ENCODE measurements at regions of chr7 and their contacts with region 1.

Region 1: DNA sequence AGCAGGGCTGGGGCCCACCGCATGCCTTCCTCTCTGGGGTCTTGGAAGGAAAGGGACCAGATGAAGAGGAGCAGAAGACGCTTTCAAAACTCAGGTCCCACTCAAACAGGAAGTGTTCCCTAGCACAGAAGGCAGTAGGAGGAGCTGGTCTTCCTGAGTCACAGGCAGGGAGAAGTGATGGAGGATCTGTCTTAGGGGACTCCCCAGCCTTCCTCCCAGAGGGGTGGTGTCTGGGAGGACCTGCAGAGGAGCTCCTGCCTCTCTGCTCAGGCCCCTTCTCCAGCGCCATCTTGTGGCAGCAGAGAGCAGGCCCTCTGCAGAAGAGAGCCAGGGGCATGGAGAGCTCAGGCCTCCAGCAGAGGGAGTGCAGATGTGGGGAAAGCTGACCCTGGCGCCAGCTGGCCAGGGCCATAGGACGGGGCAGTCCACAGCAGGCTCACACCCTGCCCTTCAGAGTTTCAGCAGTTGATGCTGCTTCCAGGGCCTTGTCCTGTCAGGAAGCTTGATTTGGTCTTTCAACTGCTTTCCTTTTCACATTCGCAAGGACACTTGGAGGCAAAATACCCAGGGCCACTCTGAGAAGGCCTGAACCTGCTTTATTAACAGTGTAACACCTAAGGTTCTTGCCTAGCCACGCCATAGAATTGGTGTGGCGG is 62.2 kb upstream of the TARP start:
- DNase-seq: peak; percentile 82
- ATAC-seq: peak; percentile 97
- H3K4me3 ChIP-seq: peak overlapping the region; percentile 45; the same call in 1 of the 2 replicates
- H3K27ac ChIP-seq: no peak overlapping the region
- H3K4me1 ChIP-seq: no peaks in the 10 kb centered on the region; the same call in 1 of the 2 replicates
- H3K27me3 ChIP-seq: no peaks in the 10 kb centered on the region
- CTCF ChIP-seq: peak; percentile 99 to 100 (median 100)
- EP300 ChIP-seq: no peak
- POLR2A ChIP-seq: no peak
- RAD21 ChIP-seq: peak; percentile 84

Region 2: GRCh38 chr7:37467002-37467401 is 868.6 kb before region 1 on chr7:
- CTCF ChIA-PET with region 1: no interaction called
- POLR2A ChIA-PET with region 1: no interaction called
- RAD21 ChIA-PET with region 1: no interaction called
- SMC1A ChIA-PET with region 1: no interaction called
- in situ Hi-C with region 1: no loop called
- intact Hi-C with region 1: no loop called
- DNase-seq: no peak
- ATAC-seq: peak; percentile 61
- H3K4me3 ChIP-seq: no peak overlapping the region
- H3K27ac ChIP-seq: no peak overlapping the region
- H3K4me1 ChIP-seq: no peaks in the 10 kb centered on the region
- H3K27me3 ChIP-seq: no peaks in the 10 kb centered on the region; a peak in 1 of 4 replicates
- CTCF ChIP-seq: no peak
- EP300 ChIP-seq: no peak
- POLR2A ChIP-seq: no peak
- RAD21 ChIP-seq: no peak

Region 3: GRCh38 chr7:37901236-37901827 is 434.3 kb before region 1 on chr7:
- CTCF ChIA-PET with region 1: interaction called, 34 read pairs
- POLR2A ChIA-PET with region 1: no interaction called
- RAD21 ChIA-PET with region 1: interaction called, 13 read pairs
- SMC1A ChIA-PET with region 1: interaction called, 14 read pairs
- in situ Hi-C with region 1: no loop called
- intact Hi-C with region 1: loop called (anchors 1 kb)
- DNase-seq: no peak
- ATAC-seq: peak; percentile 78
- H3K4me3 ChIP-seq: no peak overlapping the region
- H3K27ac ChIP-seq: no peak overlapping the region
- H3K4me1 ChIP-seq: no peaks in the 10 kb centered on the region
- H3K27me3 ChIP-seq: peaks cover 0 to 2% of the 10 kb centered on the region in 2 experiments; a peak in 1 of 4 replicates
- CTCF ChIP-seq: peak; percentile 47 to 59 (median 50); a peak in 5 of 6 replicates
- EP300 ChIP-seq: no peak
- POLR2A ChIP-seq: no peak
- RAD21 ChIP-seq: peak; percentile 64

Region 4: DNA sequence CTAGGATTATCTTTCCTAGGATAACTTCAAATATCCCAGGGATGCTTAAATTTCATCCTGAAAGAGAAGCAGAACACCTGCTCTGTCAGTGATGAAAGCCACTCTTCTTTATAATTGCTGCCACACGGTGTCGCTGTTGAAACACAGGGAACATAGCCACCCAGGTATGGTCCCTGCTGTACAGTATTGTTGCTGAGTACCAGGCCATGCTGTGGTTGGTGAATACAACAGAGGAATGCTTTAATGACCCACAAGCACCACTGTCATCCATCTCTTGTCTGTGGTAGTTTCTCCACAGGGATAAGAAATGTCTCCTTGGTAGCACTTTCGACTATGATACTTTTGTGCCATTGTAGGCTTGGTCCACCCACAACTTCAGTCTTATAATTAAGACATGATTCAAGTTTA is 228.1 kb before region 1 on chr7:
- CTCF ChIA-PET with region 1: interaction called, 75 read pairs
- POLR2A ChIA-PET with region 1: interaction called, 4 read pairs
- RAD21 ChIA-PET with region 1: interaction called, 35 read pairs
- SMC1A ChIA-PET with region 1: interaction called, 63 read pairs
- in situ Hi-C with region 1: no loop called
- intact Hi-C with region 1: loop called (anchors 5 kb)
- DNase-seq: peak; percentile 44
- ATAC-seq: peak; percentile 97
- H3K4me3 ChIP-seq: no peak overlapping the region
- H3K27ac ChIP-seq: no peak overlapping the region
- H3K4me1 ChIP-seq: no peaks in the 10 kb centered on the region; the same call in 1 of the 2 replicates
- H3K27me3 ChIP-seq: no peaks in the 10 kb centered on the region
- CTCF ChIP-seq: peak; percentile 76 to 93 (median 81)
- EP300 ChIP-seq: no peak
- POLR2A ChIP-seq: no peak
- RAD21 ChIP-seq: peak; percentile 99

Region 5: GRCh38 chr7:38215735-38216670 is 119.6 kb before region 1 on chr7:
- CTCF ChIA-PET with region 1: interaction called, 240 read pairs
- POLR2A ChIA-PET with region 1: interaction called, 8 read pairs
- RAD21 ChIA-PET with region 1: interaction called, 80 read pairs
- SMC1A ChIA-PET with region 1: interaction called, 80 read pairs
- in situ Hi-C with region 1: loop called (anchors 25 kb)
- intact Hi-C with region 1: loop called (anchors 2 kb)
- DNase-seq: peak; percentile 36
- ATAC-seq: peak; percentile 99
- H3K4me3 ChIP-seq: no peak overlapping the region
- H3K27ac ChIP-seq: peak overlapping the region; percentile 14; the same call in 1 of the 2 replicates
- H3K4me1 ChIP-seq: no peaks in the 10 kb centered on the region
- H3K27me3 ChIP-seq: no peaks in the 10 kb centered on the region
- CTCF ChIP-seq: peak; percentile 94 to 99 (median 98)
- EP300 ChIP-seq: no peak
- POLR2A ChIP-seq: no peak
- RAD21 ChIP-seq: peak; percentile 84

Region 6: GRCh38 chr7:38296059-38296857 is 39.4 kb before region 1 on chr7:
- CTCF ChIA-PET with region 1: interaction called, 12 read pairs
- POLR2A ChIA-PET with region 1: no interaction called
- RAD21 ChIA-PET with region 1: interaction called, 5 read pairs
- SMC1A ChIA-PET with region 1: interaction called, 3 read pairs
- in situ Hi-C with region 1: no loop called
- intact Hi-C with region 1: no loop called
- DNase-seq: peak; percentile 43
- ATAC-seq: peak; percentile 84
- H3K4me3 ChIP-seq: peak overlapping the region; percentile 1; the same call in 1 of the 2 replicates
- H3K27ac ChIP-seq: no peak overlapping the region; the same call in 1 of the 2 replicates
- H3K4me1 ChIP-seq: peaks cover 8% of the 10 kb centered on the region
- H3K27me3 ChIP-seq: no peaks in the 10 kb centered on the region
- CTCF ChIP-seq: no peak
- EP300 ChIP-seq: peak in 1 of 2 experiments; percentile 16; a peak in 1 of 4 replicates
- POLR2A ChIP-seq: no peak
- RAD21 ChIP-seq: no peak

Region 7: DNA sequence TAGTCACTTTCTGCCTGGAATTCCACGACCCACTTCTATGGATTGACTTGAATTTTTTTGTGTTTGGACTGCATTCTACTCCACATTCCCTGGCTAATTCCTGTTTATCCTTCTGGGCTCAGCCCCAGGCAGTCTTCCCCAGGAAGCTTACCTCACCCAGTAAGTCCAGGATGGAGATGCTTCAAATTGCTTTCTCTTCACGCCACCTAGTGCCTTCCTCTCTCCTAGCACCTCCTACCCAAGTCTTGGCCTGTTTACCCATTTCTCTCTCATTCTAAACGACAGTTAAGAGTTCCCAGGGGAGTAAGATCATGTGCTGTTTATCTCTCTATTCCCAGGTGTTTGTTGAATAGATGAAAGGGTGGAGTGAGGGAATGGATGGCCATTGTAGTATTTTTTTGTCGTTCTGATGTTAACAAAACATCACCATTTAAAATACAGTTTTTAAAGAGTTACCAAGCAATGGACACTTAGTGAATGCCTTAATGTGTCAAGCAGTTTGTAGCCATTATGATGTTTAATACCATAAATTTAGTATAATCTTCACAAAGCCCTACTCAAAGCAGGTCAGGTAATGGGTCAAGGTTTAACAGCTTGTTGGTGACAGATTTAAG is 16.7 kb before region 1 on chr7:
- CTCF ChIA-PET with region 1: interaction called, 168 read pairs
- POLR2A ChIA-PET with region 1: interaction called, 5 read pairs
- RAD21 ChIA-PET with region 1: interaction called, 80 read pairs
- SMC1A ChIA-PET with region 1: interaction called, 41 read pairs
- in situ Hi-C with region 1: no loop called
- intact Hi-C with region 1: no loop called
- DNase-seq: no peak
- ATAC-seq: peak; percentile 96
- H3K4me3 ChIP-seq: no peak overlapping the region
- H3K27ac ChIP-seq: no peak overlapping the region
- H3K4me1 ChIP-seq: no peaks in the 10 kb centered on the region
- H3K27me3 ChIP-seq: no peaks in the 10 kb centered on the region
- CTCF ChIP-seq: peak; percentile 74 to 88 (median 82)
- EP300 ChIP-seq: no peak
- POLR2A ChIP-seq: no peak
- RAD21 ChIP-seq: peak; percentile 93

Region 8: DNA sequence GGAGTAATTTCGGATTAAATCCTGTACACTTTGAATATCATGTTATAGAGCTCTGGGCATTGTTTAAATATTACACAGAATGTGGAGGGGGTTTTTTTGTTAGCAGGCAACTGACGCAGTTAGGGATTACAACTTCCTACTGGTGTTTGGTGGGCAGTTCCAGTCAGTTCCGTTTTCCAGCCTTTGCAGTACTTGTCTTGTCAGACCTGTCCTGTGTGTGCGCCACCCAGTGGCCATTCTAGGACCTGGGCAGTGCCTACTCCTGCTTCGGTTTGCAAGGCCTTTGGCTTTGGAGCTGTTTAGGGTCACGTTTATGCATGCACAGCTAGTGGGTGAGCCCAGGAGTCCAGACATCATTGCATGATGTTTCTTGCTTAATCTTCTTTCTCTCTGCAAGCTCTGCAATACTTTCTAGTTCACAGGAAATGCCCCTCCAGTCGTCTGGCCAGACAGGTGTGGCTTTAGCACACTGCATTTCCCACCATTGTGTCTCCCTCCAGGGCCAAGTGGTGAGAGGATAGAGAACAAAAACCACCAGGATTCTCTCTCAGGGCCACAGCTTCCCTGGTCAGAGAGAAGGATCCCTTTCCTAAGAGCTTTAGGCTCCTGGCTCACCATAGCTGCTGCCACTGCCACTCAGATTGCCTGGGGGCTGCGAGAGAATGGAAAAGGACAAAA is 34.3 kb after region 1 on chr7:
- CTCF ChIA-PET with region 1: interaction called, 247 read pairs
- POLR2A ChIA-PET with region 1: no interaction called
- RAD21 ChIA-PET with region 1: interaction called, 47 read pairs
- SMC1A ChIA-PET with region 1: interaction called, 48 read pairs
- in situ Hi-C with region 1: no loop called
- intact Hi-C with region 1: loop called (anchors 5 kb)
- DNase-seq: no peak
- ATAC-seq: peak; percentile 87
- H3K4me3 ChIP-seq: no peak overlapping the region
- H3K27ac ChIP-seq: peak overlapping the region; percentile 22; the same call in 1 of the 2 replicates
- H3K4me1 ChIP-seq: peaks cover 31% of the 10 kb centered on the region
- H3K27me3 ChIP-seq: no peaks in the 10 kb centered on the region
- CTCF ChIP-seq: peak; percentile 81 to 99 (median 96)
- EP300 ChIP-seq: no peak
- POLR2A ChIP-seq: no peak
- RAD21 ChIP-seq: no peak

Measured in GM12878 (cell line).